Activated CD8-positive, alpha-beta T cell treated with anti-CD3 and anti-CD28 coated beads for 36 hours (primary cell): ENCODE measurements at regions of chr10 and their contacts with region 1.

Region 1: DNA sequence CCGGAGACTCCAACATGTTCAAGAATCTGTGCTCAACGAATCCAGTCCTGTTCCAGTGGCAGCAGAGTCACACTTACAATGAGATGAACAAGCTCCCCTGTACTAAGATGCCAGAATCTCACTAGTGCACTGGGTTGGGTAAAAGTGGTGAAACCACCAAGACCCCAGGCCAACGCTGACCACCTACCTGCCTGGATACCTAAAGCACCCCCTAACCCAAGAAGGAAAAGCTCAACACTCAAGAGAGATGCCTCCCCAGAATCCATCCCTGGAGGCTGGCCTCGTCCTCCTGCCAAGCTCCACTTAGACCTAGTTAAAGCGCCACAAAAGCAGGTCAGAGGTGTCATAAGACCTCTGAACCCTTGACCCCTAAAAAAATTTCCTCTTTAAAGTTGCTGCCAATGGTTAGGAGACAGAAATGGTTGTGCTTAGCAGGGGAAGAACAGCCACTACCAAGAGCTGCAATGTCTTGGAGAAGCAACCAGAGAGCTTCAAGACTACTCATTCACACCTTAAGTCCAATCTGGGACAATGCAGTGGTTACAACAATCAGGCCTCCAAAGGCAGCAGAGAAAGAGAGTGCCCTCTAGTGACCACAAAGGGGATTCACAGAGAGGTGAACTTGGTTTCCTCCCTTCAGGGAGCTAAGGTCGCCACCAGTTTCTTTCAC is 94.6 kb upstream of the MACROH2A2 start:
- DNase-seq: peak; percentile 37
- ATAC-seq: peak; percentile 86
- H3K4me3 Mint-ChIP-seq: no peak overlapping the region
- H3K27ac Mint-ChIP-seq: no peak overlapping the region
- H3K4me1 Mint-ChIP-seq: no peaks in the 10 kb centered on the region
- H3K27me3 Mint-ChIP-seq: peaks cover 2% of the 10 kb centered on the region
- CTCF ChIP-seq: peak; percentile 78

Region 2: DNA sequence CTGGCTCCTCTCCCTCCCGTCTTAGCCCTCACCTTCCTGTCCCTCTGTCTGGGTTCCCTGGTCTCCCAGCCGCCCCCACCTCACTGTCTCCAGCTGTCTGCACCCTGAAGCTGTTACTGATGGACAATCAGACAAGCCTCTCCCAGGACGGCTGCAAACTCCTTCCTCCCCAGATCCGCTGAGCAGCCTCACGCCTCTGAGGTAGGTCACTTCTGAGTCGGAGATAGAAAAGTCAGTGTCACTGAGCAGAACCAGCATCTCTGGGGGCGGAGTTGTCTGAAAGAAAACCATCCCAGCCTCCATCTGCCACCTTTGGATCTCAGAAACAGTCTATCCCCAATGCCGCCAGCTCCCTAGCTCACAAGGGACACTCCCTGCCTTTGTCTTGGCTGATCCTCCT is 300.6 kb before region 1 on chr10:
- CTCF ChIA-PET with region 1: no interaction called
- POLR2A ChIA-PET with region 1: no interaction called
- intact Hi-C with region 1: no loop called
- DNase-seq: no peak
- ATAC-seq: no peak
- H3K4me3 Mint-ChIP-seq: no peak overlapping the region
- H3K27ac Mint-ChIP-seq: no peak overlapping the region
- H3K4me1 Mint-ChIP-seq: no peaks in the 10 kb centered on the region
- H3K27me3 Mint-ChIP-seq: peaks cover 7% of the 10 kb centered on the region
- CTCF ChIP-seq: no peak

Region 3: GRCh38 chr10:69901628-69902505 is 56.2 kb before region 1 on chr10:
- CTCF ChIA-PET with region 1: interaction called, 14 read pairs
- POLR2A ChIA-PET with region 1: no interaction called
- intact Hi-C with region 1: no loop called
- DNase-seq: peak; percentile 38
- ATAC-seq: peak; percentile 47
- H3K4me3 Mint-ChIP-seq: no peak overlapping the region
- H3K27ac Mint-ChIP-seq: no peak overlapping the region
- H3K4me1 Mint-ChIP-seq: no peaks in the 10 kb centered on the region
- H3K27me3 Mint-ChIP-seq: no peaks in the 10 kb centered on the region
- CTCF ChIP-seq: peak; percentile 33

Region 4: DNA sequence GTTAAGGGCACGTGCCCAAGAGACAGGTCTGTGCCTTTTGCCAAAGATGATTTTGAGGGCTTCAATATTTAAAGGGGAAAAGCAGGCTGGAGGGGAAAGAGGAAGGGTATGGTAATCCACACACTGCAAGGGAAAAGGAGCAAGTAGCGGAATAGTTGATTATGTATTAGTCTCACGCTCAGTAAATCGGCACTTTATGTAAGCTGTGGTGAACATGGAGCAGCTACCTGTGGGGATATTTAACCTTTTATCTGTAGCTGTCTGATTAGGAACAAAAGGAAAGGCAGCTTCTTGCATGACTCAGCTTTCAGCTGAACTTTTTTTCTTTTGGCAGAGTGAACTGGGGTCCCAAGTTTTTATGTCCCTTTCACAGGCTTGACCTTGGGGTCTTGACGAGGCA is 32.9 kb before region 1 on chr10:
- CTCF ChIA-PET with region 1: interaction called, 12 read pairs
- POLR2A ChIA-PET with region 1: no interaction called
- intact Hi-C with region 1: no loop called
- DNase-seq: no peak
- ATAC-seq: no peak
- H3K4me3 Mint-ChIP-seq: no peak overlapping the region
- H3K27ac Mint-ChIP-seq: no peak overlapping the region
- H3K4me1 Mint-ChIP-seq: no peaks in the 10 kb centered on the region
- H3K27me3 Mint-ChIP-seq: peaks cover 1% of the 10 kb centered on the region
- CTCF ChIP-seq: no peak

Region 5: DNA sequence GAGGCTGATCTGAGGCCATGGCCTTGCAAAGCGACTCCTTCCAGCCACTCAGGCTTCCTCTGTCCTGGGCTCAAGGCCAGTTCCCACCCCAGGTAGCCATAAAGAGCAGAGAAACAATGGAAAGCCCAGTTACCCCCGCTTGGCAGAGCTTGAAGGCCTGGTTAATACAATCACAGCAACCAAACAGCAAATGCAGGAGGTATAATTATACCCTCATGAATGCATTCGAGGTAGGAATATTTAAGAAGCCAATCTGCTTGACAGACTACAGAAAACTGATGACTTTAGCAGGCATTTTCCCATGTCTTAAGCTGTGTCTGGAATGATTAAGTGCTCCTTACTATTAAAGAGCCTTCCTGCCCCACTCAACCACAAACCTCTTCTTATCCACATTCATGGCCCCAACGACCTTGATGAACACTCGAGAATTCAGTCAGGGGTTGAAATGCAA is 19.5 kb before region 1 on chr10:
- CTCF ChIA-PET with region 1: interaction called, 24 read pairs
- POLR2A ChIA-PET with region 1: no interaction called
- intact Hi-C with region 1: no loop called
- DNase-seq: no peak
- ATAC-seq: no peak
- H3K4me3 Mint-ChIP-seq: no peak overlapping the region
- H3K27ac Mint-ChIP-seq: no peak overlapping the region
- H3K4me1 Mint-ChIP-seq: no peaks in the 10 kb centered on the region
- H3K27me3 Mint-ChIP-seq: peaks cover 3% of the 10 kb centered on the region
- CTCF ChIP-seq: no peak

Region 6: GRCh38 chr10:69972981-69973397 is 15.0 kb after region 1 on chr10:
- CTCF ChIA-PET with region 1: interaction called, 16 read pairs
- POLR2A ChIA-PET with region 1: no interaction called
- intact Hi-C with region 1: no loop called
- DNase-seq: no peak
- ATAC-seq: no peak
- H3K4me3 Mint-ChIP-seq: no peak overlapping the region
- H3K27ac Mint-ChIP-seq: no peak overlapping the region
- H3K4me1 Mint-ChIP-seq: peaks cover 3% of the 10 kb centered on the region
- H3K27me3 Mint-ChIP-seq: peaks cover 20% of the 10 kb centered on the region
- CTCF ChIP-seq: no peak